Right cardiac atrium (tissue), 5 donors: ENCODE measurements at regions of chr2 and their contacts with region 1.

Region 1: DNA sequence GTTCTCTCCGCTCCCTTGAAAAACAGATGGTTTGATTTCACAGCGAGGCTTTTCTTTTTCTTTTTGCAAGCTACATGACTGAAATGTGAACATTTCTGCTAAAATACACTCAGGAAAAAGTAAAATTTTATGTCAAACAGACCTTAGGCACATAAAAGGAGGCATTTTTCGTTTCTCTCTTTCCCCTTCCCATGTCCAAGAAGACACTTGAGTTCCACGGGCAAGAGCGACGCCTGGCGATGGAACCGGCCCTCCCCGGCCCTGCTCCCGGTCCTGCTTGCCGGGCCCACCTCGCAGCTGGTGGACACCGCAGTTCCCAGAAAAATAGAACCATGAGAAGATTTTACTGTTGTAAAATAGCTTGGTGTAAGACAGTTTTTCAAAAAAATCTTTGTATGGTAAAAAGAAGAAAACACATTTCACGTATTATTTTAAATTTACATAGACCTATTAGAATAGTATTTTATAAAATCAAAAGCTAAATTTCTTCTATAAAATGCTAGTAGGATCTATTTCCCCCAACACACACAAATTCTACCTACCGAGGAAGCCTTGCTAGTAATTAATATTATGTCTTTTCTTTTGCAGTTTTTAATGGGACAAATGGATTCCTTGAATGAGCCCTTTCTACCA is 2.3 kb upstream of the ALKAL2 start:
- DNase-seq: peak; percentile 74 to 90 (median 88)
- ATAC-seq: peak; percentile 82 to 86
- H3K4me3 ChIP-seq: peak overlapping the region; percentile 86
- H3K27ac ChIP-seq: no peak overlapping the region
- H3K4me1 ChIP-seq: peaks cover 6% of the 10 kb centered on the region
- H3K27me3 ChIP-seq: no peaks in the 10 kb centered on the region

Region 2: DNA sequence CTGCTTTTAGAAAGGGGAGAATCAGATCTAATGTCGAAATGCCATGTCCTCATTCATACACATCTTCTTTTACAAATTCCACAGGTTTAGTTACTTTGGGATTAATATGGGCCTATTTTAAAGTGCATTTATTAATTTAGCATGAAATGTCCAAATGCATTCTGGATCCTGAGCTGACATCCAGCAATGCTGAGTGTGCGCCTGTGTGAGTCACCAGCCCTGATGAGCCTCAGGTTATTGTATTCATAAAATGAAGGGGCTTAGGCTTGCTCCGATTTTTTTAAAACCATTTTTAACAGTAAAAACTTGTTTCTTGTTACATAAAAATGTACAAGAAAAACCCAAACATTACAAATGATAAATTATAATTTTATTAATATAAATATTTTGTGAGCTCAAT is 120.5 kb before region 1 on chr2:
- intact Hi-C with region 1: loop called in 1 of 4 experiments (anchors 5 kb)
- DNase-seq: no peak
- ATAC-seq: no peak
- H3K4me3 ChIP-seq: no peak overlapping the region
- H3K27ac ChIP-seq: no peak overlapping the region
- H3K4me1 ChIP-seq: no peaks in the 10 kb centered on the region
- H3K27me3 ChIP-seq: no peaks in the 10 kb centered on the region